Common myeloid progenitor, CD34-positive (primary cell): ENCODE measurements at regions of chr12 and their contacts with region 1.

Region 1: GRCh38 chr12:15856097-15856982 is 25.8 kb upstream of the STRAP start:
- DNase-seq: peak; percentile 70 to 84 (median 80)
- H3K4me3 ChIP-seq: no peak overlapping the region
- H3K27ac ChIP-seq: no peak overlapping the region
- H3K4me1 ChIP-seq: peaks cover 0 to 2% (median 1%) of the 10 kb centered on the region in 4 experiments
- H3K27me3 ChIP-seq: no peaks in the 10 kb centered on the region

Region 2: GRCh38 chr12:15584366-15585041 is 271.8 kb before region 1 on chr12:
- CTCF ChIA-PET with region 1: interaction called, 109 read pairs
- POLR2A ChIA-PET with region 1: no interaction called
- DNase-seq: peak; percentile 76 to 89 (median 82)
- H3K4me3 ChIP-seq: no peak overlapping the region
- H3K27ac ChIP-seq: no peak overlapping the region
- H3K4me1 ChIP-seq: no peaks in the 10 kb centered on the region
- H3K27me3 ChIP-seq: peaks cover 0 to 3% (median 0%) of the 10 kb centered on the region in 5 experiments

Region 3: GRCh38 chr12:15590180-15590826 is 266.0 kb before region 1 on chr12:
- CTCF ChIA-PET with region 1: interaction called, 109 read pairs
- POLR2A ChIA-PET with region 1: no interaction called
- DNase-seq: peak; percentile 56 to 75 (median 73)
- H3K4me3 ChIP-seq: peak overlapping the region in 5 of 7 experiments; percentile 16 to 66 (median 38)
- H3K27ac ChIP-seq: no peak overlapping the region
- H3K4me1 ChIP-seq: peaks cover 0 to 6% (median 4%) of the 10 kb centered on the region in 4 experiments
- H3K27me3 ChIP-seq: peaks cover 0 to 3% (median 0%) of the 10 kb centered on the region in 5 experiments

Region 4: GRCh38 chr12:15899282-15899870 is 43.0 kb after region 1 on chr12:
- CTCF ChIA-PET with region 1: interaction called, 25 read pairs
- POLR2A ChIA-PET with region 1: no interaction called
- DNase-seq: peak; percentile 28 to 58 (median 45)
- H3K4me3 ChIP-seq: no peak overlapping the region
- H3K27ac ChIP-seq: no peak overlapping the region
- H3K4me1 ChIP-seq: no peaks in the 10 kb centered on the region
- H3K27me3 ChIP-seq: no peaks in the 10 kb centered on the region

Region 5: GRCh38 chr12:15979096-15980092 is 123.1 kb after region 1 on chr12:
- CTCF ChIA-PET with region 1: no interaction called
- POLR2A ChIA-PET with region 1: no interaction called
- DNase-seq: no peak
- H3K4me3 ChIP-seq: no peak overlapping the region
- H3K27ac ChIP-seq: no peak overlapping the region
- H3K4me1 ChIP-seq: no peaks in the 10 kb centered on the region
- H3K27me3 ChIP-seq: no peaks in the 10 kb centered on the region